Prostate gland (tissue), 2 donors: ENCODE measurements at regions of chr17 and their contacts with region 1.

Region 1: GRCh38 chr17:83051395-83052233 is 27.8 kb upstream of the METRNL start:
- DNase-seq: peak; percentile 96
- H3K4me3 ChIP-seq: peak overlapping the region; percentile 72 to 84
- H3K27ac ChIP-seq: peak overlapping the region; percentile 71 to 78
- H3K4me1 ChIP-seq: peaks cover 8% of the 10 kb centered on the region
- H3K27me3 ChIP-seq: no peaks in the 10 kb centered on the region
- CTCF ChIP-seq: peak in 1 of 4 experiments; percentile 12
- POLR2A ChIP-seq: peak; percentile 88

Region 2: GRCh38 chr17:82804442-82805191 is 247.0 kb before region 1 on chr17:
- intact Hi-C with region 1: no loop called
- DNase-seq: peak; percentile 61
- H3K4me3 ChIP-seq: no peak overlapping the region
- H3K27ac ChIP-seq: peak overlapping the region; percentile 28 to 68
- H3K4me1 ChIP-seq: no peaks in the 10 kb centered on the region
- H3K27me3 ChIP-seq: no peaks in the 10 kb centered on the region
- CTCF ChIP-seq: peak in 1 of 4 experiments; percentile 36
- POLR2A ChIP-seq: no peak

Region 3: DNA sequence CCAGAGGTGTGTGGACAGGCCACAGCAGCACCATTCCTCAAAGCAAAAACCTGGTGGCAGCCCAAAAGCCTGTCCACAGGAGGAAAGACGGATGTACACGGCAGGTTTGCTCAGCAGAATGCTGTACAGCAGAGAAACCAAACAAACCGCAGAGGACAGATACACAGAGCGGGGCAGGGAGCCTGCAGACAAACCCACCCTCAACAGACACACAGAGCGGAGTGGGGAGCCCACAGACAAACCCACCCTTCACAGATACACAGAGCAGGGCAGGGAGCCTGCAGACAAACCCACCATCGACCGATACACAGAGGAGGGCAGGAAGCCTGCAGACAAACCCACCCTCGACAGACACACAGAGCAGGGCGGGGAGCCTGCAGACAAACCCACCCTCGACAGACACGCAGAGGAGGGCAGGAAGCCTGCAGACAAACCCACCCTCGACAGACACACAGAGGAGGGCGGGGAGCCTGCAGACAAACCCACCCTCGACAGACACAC is 25.3 kb before region 1 on chr17:
- intact Hi-C with region 1: no loop called
- DNase-seq: no peak
- H3K4me3 ChIP-seq: no peak overlapping the region
- H3K27ac ChIP-seq: no peak overlapping the region
- H3K4me1 ChIP-seq: no peaks in the 10 kb centered on the region
- H3K27me3 ChIP-seq: no peaks in the 10 kb centered on the region
- CTCF ChIP-seq: no peak
- POLR2A ChIP-seq: no peak

Region 4: DNA sequence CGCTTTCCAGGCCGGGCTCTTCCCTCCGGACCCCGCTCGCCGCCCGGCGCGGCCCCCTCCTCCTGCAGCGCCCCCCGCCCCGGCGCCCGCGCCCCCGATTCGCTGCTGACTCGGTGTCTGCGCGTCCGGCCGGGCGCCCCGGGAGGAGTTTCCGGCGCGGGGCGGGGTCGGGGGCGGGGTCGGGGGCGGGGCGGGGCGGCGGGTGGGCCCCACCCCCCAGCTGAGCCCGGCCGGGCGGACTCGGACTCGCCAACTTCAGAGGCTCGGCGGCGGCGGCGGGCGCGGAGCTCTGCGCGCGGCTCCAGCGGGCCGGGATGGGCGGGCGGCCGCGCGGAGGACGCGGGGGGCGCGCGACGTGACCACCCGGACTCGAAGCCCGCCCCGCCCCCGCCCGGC is 27.7 kb after region 1 on chr17 and contains the start of gene METRNL:
- intact Hi-C with region 1: loop called (anchors 2 kb)
- DNase-seq: peak; percentile 68
- H3K4me3 ChIP-seq: peak within 1 kb of the TSS; percentile 70 to 71
- H3K27ac ChIP-seq: peak within 1 kb of the TSS; percentile 66 to 69
- H3K4me1 ChIP-seq: peaks cover 11% of the 10 kb centered on the region
- H3K27me3 ChIP-seq: no peaks in the 10 kb centered on the region
- CTCF ChIP-seq: no peak
- POLR2A ChIP-seq: peak; percentile 35
- total RNA-seq, gene METRNL: 22.4 to 59.4 TPM